ENCODE measurements at regions of chr15 and their contacts with region 1.

Region 1: GRCh38 chr15:73601451-73602445 is 31.4 kb downstream of the NPTN start:
- DNase-seq: no peak
- H3K4me3 Mint-ChIP-seq: no peak overlapping the region
- H3K27ac Mint-ChIP-seq: no peak overlapping the region
- H3K4me1 Mint-ChIP-seq: peaks cover 1% of the 10 kb centered on the region
- H3K27me3 Mint-ChIP-seq: no peaks in the 10 kb centered on the region

Region 2: GRCh38 chr15:73394782-73395181 is 207.0 kb before region 1 on chr15:
- intact Hi-C with region 1: no loop called
- DNase-seq: no peak
- H3K4me3 Mint-ChIP-seq: no peak overlapping the region
- H3K27ac Mint-ChIP-seq: no peak overlapping the region
- H3K4me1 Mint-ChIP-seq: no peaks in the 10 kb centered on the region
- H3K27me3 Mint-ChIP-seq: no peaks in the 10 kb centered on the region

Region 3: DNA sequence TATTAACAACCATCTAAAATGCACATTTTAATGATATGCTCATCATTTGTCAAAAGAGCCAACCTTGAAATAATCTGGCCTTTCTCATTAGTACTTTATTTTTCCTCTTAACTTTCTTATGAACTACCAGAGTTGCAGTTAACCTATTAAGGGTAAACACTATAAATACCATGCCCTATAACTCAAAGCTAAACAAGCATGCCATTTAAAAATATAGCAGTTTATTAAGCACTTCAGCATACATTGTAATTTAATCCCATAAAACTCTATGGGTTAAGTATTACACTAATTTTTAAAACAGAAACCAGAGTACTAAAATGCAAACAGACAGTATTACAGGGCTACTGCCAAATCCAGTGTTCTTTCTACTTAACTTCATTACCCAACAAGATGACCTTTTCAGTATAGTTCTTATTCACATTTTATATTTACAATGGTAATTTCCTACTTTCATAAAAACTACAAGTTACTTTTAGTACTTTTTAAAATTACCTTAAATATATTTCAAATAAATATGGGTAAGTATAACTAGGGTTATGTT is 19.6 kb after region 1 on chr15:
- intact Hi-C with region 1: loop called (anchors 2 kb)
- DNase-seq: no peak
- H3K4me3 Mint-ChIP-seq: no peak overlapping the region
- H3K27ac Mint-ChIP-seq: no peak overlapping the region
- H3K4me1 Mint-ChIP-seq: peaks cover 20% of the 10 kb centered on the region
- H3K27me3 Mint-ChIP-seq: no peaks in the 10 kb centered on the region

Measured in activated T-helper 1 cell treated with anti-CD3 and anti-CD28 coated beads, Interleukin-12 subunit alpha, Interleukin-12 subunit beta, Interleukin-2, Interleukin-4 antibody, amounts not matched to agents 30 ng/mL and 10 ng/mL and 1 ng/mL, durations not matched to agents 14 hours and 24 hours and 36 hours (primary cell).